ENCODE measurements at regions of chr3 and their contacts with region 1.

Region 1: DNA sequence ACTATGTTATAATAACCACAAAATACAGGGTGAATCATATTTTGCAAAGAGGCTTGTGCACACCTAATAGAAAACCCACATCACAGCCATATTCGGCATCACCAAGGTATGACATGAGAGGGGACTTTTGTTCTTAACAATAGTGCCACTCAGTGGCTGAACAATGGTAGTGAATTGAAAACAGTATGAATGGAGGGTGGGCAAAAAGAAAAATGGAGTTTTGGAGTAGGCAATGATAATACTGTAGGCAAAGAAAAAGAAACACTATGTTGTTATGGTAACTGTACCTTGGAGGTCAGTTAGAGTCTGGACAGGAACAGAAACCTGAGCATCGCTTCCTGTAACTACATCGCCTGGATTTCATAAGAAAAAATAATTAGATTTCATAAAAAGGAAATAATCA is 348.6 kb downstream of the PLCL2 start:
- DNase-seq: no peak
- H3K4me3 ChIP-seq: no peak overlapping the region
- H3K27ac ChIP-seq: no peak overlapping the region
- H3K4me1 ChIP-seq: peaks cover 0 to 39% (median 13%) of the 10 kb centered on the region in 6 donors
- H3K27me3 ChIP-seq: no peaks in the 10 kb centered on the region
- CTCF ChIP-seq: peak; percentile 55 to 88 (median 76)
- POLR2A ChIP-seq: no peak

Region 2: DNA sequence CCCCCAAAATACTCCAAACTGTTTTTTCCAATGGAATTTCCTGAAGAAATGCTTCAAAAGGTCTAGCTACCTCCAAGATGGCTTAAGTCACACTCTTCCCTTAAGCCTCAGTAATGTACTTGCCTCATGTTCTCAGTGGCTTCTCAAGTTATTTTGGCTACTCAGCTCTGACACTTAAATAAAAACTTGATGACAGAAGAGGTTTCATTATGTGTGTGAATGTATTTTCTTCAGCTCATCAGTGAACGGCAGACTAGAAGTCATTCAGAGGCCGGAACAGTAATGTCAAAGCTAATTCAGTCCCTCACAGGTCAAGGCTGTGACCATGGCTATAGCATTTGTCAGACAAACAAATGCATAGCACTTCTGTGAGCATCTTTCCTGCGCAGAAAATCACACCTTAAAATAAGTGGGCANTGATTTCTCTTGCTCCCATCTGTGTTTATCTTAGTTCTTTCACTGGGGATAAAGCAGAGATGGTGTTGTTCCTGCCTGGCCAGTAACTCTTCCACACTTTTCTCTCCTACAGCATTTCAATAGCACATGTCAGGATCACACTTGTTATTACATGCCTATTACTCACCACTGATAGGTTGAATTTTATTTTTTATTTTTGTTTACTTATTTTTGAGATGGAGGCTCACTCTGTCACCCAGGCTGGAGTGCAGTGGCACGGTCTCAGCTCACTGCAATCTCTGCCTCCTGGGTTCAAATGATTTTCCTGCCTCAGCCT is 417.2 kb before region 1 on chr3:
- intact Hi-C with region 1: loop called (anchors 10 kb)
- DNase-seq: no peak
- H3K4me3 ChIP-seq: no peak overlapping the region
- H3K27ac ChIP-seq: no peak overlapping the region
- H3K4me1 ChIP-seq: no peaks in the 10 kb centered on the region
- H3K27me3 ChIP-seq: no peaks in the 10 kb centered on the region
- CTCF ChIP-seq: no peak
- POLR2A ChIP-seq: no peak

Region 3: GRCh38 chr3:17585394-17586325 is 352.3 kb after region 1 on chr3:
- intact Hi-C with region 1: no loop called
- DNase-seq: no peak
- H3K4me3 ChIP-seq: no peak overlapping the region
- H3K27ac ChIP-seq: no peak overlapping the region
- H3K4me1 ChIP-seq: peaks cover 0 to 24% (median under 1%) of the 10 kb centered on the region in 6 donors
- H3K27me3 ChIP-seq: no peaks in the 10 kb centered on the region
- CTCF ChIP-seq: no peak
- POLR2A ChIP-seq: no peak